Activated T-helper 2 cell treated with anti-CD3 and anti-CD28 coated beads, Interferon-gamma antibody, Interleukin-2, Interleukin-4, amounts not matched to agents 10 μg/mL and 5 μg/mL and 100 μg/mL, durations not matched to agents 14 hours and 24 hours and 36 hours (primary cell): ENCODE measurements at regions of chr2 and their contacts with region 1.

Region 1: DNA sequence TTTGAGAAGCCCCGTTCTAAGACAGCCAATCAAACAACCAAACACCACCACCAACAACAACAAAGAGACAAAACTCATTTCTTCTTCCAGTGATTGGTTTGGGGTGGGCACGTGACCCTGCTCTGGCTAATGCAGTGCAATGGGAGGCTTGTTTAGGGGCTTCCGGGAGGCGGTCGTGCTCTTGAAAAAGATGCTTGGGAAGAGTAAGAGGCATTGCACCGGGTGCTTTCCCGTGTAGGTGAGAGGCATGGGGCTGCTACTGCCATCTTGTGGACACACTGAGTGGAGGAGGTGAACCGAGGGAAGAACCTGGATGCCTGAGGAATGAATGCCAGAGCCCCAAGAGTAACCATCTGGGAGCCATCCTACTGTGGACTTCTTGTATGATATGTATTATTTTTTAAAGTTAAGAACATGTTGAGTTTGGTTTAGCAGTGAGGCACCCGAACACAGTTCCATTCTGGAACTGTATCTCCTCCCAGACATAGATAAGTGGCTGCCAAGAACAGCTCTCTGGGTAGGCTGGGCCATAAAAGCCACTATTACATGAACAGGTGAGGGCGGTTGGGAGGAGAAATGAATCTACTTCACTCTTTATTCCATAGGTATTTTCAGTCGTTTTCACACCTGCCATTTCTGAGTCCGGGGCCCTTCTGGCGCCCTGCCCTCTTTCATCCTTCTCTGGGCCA is 19.1 kb upstream of the ARHGAP25 start:
- DNase-seq: no peak
- H3K4me3 Mint-ChIP-seq: no peak overlapping the region
- H3K27ac Mint-ChIP-seq: peak overlapping the region; percentile 60
- H3K4me1 Mint-ChIP-seq: peaks cover 73% of the 10 kb centered on the region
- H3K27me3 Mint-ChIP-seq: no peaks in the 10 kb centered on the region

Region 2: GRCh38 chr2:68385220-68385906 is 330.1 kb before region 1 on chr2:
- intact Hi-C with region 1: loop called (anchors 5 kb)
- DNase-seq: no peak
- H3K4me3 Mint-ChIP-seq: no peak overlapping the region
- H3K27ac Mint-ChIP-seq: no peak overlapping the region
- H3K4me1 Mint-ChIP-seq: peaks cover 36% of the 10 kb centered on the region
- H3K27me3 Mint-ChIP-seq: peaks cover 18% of the 10 kb centered on the region

Region 3: GRCh38 chr2:68653538-68653982 is 61.9 kb before region 1 on chr2:
- intact Hi-C with region 1: loop called (anchors 1 kb)
- DNase-seq: peak; percentile 56
- H3K4me3 Mint-ChIP-seq: peak overlapping the region; percentile 35
- H3K27ac Mint-ChIP-seq: peak overlapping the region; percentile 42
- H3K4me1 Mint-ChIP-seq: peaks cover 49% of the 10 kb centered on the region
- H3K27me3 Mint-ChIP-seq: peaks cover 37% of the 10 kb centered on the region

Region 4: DNA sequence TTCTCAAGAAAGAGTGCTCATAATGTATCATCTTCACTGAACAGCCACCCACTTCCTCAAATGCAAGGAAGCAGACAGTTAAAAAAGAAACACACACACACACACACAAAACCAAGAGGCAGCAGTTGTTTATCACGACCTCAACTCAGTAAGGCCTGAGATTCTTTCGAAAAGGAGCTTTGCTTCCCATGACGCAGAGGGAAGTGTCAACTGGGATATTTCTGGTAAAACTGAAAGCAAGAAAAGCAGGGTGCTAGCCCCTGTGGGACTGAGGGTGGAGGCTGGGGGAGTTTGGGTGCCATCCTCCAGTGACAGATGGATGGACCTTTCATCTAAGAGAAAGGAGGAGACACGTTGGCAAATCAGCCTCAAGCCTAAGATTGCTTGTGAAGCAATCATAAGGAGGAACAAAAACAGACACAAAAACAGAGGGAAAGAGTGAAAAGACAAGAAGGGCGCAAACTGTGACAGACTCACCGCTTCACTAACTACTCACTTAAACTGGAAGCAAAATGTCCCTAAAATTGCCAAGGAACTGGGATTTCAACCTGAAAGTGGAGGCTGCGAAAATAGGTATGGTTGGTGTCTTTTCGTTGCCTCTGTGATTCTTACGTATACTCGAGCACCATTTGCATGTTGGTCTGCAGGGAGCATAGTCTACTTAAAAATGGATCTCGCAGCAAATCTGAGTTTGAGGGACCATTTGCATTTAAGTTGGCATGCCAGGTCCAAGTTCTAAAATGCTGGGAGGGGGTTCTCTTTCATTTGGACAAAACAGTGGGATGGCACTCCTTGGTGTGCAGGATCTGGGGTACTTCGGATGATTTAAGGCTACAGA is 19.4 kb after region 1 on chr2 and contains the start of gene ARHGAP25:
- intact Hi-C with region 1: loop called (anchors 1 kb)
- DNase-seq: peak; percentile 49
- H3K4me3 Mint-ChIP-seq: no peak within 1 kb of the TSS
- H3K27ac Mint-ChIP-seq: no peak within 1 kb of the TSS
- H3K4me1 Mint-ChIP-seq: peaks cover 29% of the 10 kb centered on the region
- H3K27me3 Mint-ChIP-seq: no peaks in the 10 kb centered on the region
- total RNA-seq, gene ARHGAP25: 39.9 and 41.3 TPM in 2 replicates

Region 5: DNA sequence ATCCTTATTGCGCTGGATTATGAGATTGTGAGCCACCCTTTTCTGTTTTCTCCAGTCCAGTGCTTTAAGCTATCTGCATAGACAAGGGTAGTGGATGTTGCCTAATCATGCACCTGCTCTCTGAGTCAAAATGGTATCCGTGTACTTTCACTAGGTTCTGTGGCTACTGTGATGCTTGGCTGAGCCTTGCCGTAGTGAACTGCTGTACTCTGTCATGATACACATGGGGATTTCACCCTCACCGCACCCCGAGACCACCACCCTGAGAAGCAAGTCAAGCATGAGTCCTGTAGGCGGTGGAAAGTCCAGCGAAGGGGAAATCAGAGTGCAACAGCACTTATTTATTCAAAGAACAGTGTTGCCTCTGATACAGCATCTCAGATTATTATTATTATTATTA is 74.1 kb after region 1 on chr2:
- intact Hi-C with region 1: no loop called
- DNase-seq: peak; percentile 6
- H3K4me3 Mint-ChIP-seq: no peak overlapping the region
- H3K27ac Mint-ChIP-seq: no peak overlapping the region
- H3K4me1 Mint-ChIP-seq: peaks cover 20% of the 10 kb centered on the region
- H3K27me3 Mint-ChIP-seq: no peaks in the 10 kb centered on the region

Region 6: GRCh38 chr2:68837164-68837860 is 121.8 kb after region 1 on chr2:
- intact Hi-C with region 1: loop called (anchors 2 kb)
- DNase-seq: peak; percentile 43
- H3K4me3 Mint-ChIP-seq: no peak overlapping the region
- H3K27ac Mint-ChIP-seq: peak overlapping the region; percentile 78
- H3K4me1 Mint-ChIP-seq: peaks cover 49% of the 10 kb centered on the region
- H3K27me3 Mint-ChIP-seq: no peaks in the 10 kb centered on the region

Region 7: GRCh38 chr2:70069049-70069448 is 1353.6 kb after region 1 on chr2:
- intact Hi-C with region 1: loop called (anchors 5 kb)
- DNase-seq: peak; percentile 75
- H3K4me3 Mint-ChIP-seq: no peak overlapping the region
- H3K27ac Mint-ChIP-seq: peak overlapping the region; percentile 86
- H3K4me1 Mint-ChIP-seq: peaks cover 41% of the 10 kb centered on the region
- H3K27me3 Mint-ChIP-seq: no peaks in the 10 kb centered on the region